Calu3 (cell line): ENCODE measurements at regions of chr3 and their contacts with region 1.

Region 1: GRCh38 chr3:194023501-194024280 is 112.3 kb upstream of the HES1 start:
- DNase-seq: no peak
- H3K4me3 Mint-ChIP-seq: no peak overlapping the region
- H3K27ac Mint-ChIP-seq: no peak overlapping the region
- H3K4me1 Mint-ChIP-seq: peaks cover 40% of the 10 kb centered on the region
- H3K27me3 Mint-ChIP-seq: no peaks in the 10 kb centered on the region
- CTCF ChIP-seq: no peak

Region 2: GRCh38 chr3:193289281-193289680 is 734.4 kb before region 1 on chr3:
- CTCF ChIA-PET with region 1: no interaction called
- intact Hi-C with region 1: no loop called
- DNase-seq: no peak
- H3K4me3 Mint-ChIP-seq: no peak overlapping the region
- H3K27ac Mint-ChIP-seq: no peak overlapping the region
- H3K4me1 Mint-ChIP-seq: no peaks in the 10 kb centered on the region
- H3K27me3 Mint-ChIP-seq: no peaks in the 10 kb centered on the region
- CTCF ChIP-seq: no peak

Region 3: GRCh38 chr3:193704432-193704831 is 319.3 kb before region 1 on chr3:
- CTCF ChIA-PET with region 1: no interaction called
- intact Hi-C with region 1: no loop called
- DNase-seq: no peak
- H3K4me3 Mint-ChIP-seq: no peak overlapping the region
- H3K27ac Mint-ChIP-seq: no peak overlapping the region
- H3K4me1 Mint-ChIP-seq: no peaks in the 10 kb centered on the region
- H3K27me3 Mint-ChIP-seq: no peaks in the 10 kb centered on the region
- CTCF ChIP-seq: no peak

Region 4: GRCh38 chr3:193998123-193998448 is 25.6 kb before region 1 on chr3:
- CTCF ChIA-PET with region 1: interaction called, 11 read pairs
- intact Hi-C with region 1: no loop called
- DNase-seq: no peak
- H3K4me3 Mint-ChIP-seq: no peak overlapping the region
- H3K27ac Mint-ChIP-seq: no peak overlapping the region
- H3K4me1 Mint-ChIP-seq: peaks cover 12% of the 10 kb centered on the region
- H3K27me3 Mint-ChIP-seq: no peaks in the 10 kb centered on the region
- CTCF ChIP-seq: no peak

Region 5: GRCh38 chr3:194671900-194672808 is 648.5 kb after region 1 on chr3 and contains the start of gene LSG1:
- CTCF ChIA-PET with region 1: no interaction called
- intact Hi-C with region 1: no loop called
- DNase-seq: peak; percentile 94
- H3K4me3 Mint-ChIP-seq: peak within 1 kb of the TSS; percentile 100
- H3K27ac Mint-ChIP-seq: peak within 1 kb of the TSS; percentile 99
- H3K4me1 Mint-ChIP-seq: peaks cover 53% of the 10 kb centered on the region
- H3K27me3 Mint-ChIP-seq: peaks cover 30% of the 10 kb centered on the region
- CTCF ChIP-seq: no peak
- total RNA-seq, gene LSG1: 86.3 and 90.8 TPM in 2 replicates